ENCODE measurements at regions of chr17 and their contacts with region 1.

Region 1: DNA sequence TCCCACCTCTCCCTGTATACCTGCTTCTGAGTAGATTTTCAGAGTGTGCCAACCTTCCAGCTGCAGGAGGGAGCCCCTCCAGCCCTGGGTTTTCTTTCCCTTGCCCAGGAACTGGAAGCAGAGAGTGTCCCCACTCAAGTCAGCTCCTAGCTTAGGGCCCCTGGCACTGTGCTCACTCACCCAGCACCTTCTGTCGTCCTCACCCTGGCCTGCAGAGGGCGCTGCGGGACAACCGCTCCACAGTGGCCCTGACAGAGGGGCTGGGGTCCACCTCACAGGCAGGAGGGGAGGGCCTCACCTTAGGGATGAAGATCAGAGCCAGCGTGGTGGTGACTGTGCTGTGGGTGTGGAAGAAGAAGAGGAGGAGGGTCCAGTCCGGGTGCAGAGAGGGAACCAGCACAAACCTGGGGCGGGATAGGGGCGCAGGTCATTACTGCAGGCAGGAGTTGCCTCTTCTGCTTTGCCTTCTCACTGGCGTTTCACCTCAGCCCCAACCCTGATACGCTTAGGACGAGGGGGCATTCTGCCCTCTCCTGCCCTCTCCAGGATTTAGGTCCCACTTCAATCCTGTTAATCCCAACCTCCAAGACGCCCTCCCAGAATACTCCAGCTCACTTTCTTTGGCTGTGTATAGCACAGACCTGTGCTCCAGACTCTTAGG is 10.0 kb downstream of the GPR179 start:
- DNase-seq: no peak
- ATAC-seq: peak; percentile 84
- H3K4me3 ChIP-seq: no peak overlapping the region
- H3K27ac ChIP-seq: no peak overlapping the region
- H3K4me1 ChIP-seq: no peaks in the 10 kb centered on the region
- H3K27me3 ChIP-seq: no peaks in the 10 kb centered on the region
- CTCF ChIP-seq: peak; percentile 62 to 73 (median 67)
- EP300 ChIP-seq: no peak
- POLR2A ChIP-seq: no peak
- RAD21 ChIP-seq: peak; percentile 44; the same call in 1 of the 2 replicates

Region 2: GRCh38 chr17:38322091-38322779 is 11.5 kb before region 1 on chr17:
- CTCF ChIA-PET with region 1: interaction called, 36 read pairs
- POLR2A ChIA-PET with region 1: interaction called, 4 read pairs
- RAD21 ChIA-PET with region 1: no interaction called
- SMC1A ChIA-PET with region 1: no interaction called
- in situ Hi-C with region 1: no loop called
- intact Hi-C with region 1: no loop called
- DNase-seq: no peak
- ATAC-seq: peak; percentile 96
- H3K4me3 ChIP-seq: no peak overlapping the region
- H3K27ac ChIP-seq: no peak overlapping the region
- H3K4me1 ChIP-seq: no peaks in the 10 kb centered on the region; the same call in 1 of the 2 replicates
- H3K27me3 ChIP-seq: no peaks in the 10 kb centered on the region
- CTCF ChIP-seq: peak; percentile 51 to 84 (median 57)
- EP300 ChIP-seq: no peak
- POLR2A ChIP-seq: no peak
- RAD21 ChIP-seq: peak; percentile 58

Region 3: DNA sequence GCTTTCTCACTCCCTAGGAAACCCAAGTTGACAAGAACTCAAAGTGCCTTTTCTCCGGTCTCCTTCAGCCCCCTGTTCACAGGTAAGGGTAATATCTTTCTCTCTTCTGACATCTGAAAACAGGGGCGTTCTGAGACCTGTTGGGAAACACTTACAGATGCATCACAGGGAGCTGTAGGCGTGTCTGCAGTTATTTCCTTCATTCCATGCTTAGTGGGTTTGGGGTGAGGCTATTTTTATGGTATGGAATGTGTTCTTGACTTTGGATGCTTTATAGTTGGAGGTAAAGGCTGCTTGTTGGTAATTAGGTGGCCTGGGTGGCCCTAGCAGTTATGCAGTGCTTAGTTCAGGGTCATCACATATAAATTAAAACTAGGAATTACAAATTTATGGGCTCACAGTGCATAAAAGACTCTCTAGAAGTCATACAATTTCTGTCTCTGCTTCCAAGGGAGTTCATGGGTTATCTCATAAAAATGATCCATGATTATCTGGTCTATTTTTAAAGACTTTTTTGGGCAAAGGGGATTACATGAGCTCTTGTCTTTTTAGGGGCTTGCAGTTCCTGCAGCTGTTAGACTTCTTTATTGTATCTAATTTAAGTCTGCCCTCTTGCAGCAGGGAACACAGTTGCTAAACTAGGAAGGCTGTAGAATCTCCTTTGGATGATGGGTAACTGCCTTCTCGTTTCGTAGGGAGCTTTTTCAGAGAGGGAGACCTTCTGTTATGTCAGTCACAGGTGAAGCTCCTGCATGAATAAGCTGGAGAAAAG is 28.1 kb after region 1 on chr17:
- CTCF ChIA-PET with region 1: no interaction called
- POLR2A ChIA-PET with region 1: no interaction called
- RAD21 ChIA-PET with region 1: no interaction called
- SMC1A ChIA-PET with region 1: no interaction called
- in situ Hi-C with region 1: no loop called
- intact Hi-C with region 1: no loop called
- DNase-seq: no peak
- ATAC-seq: no peak
- H3K4me3 ChIP-seq: no peak overlapping the region
- H3K27ac ChIP-seq: no peak overlapping the region
- H3K4me1 ChIP-seq: no peaks in the 10 kb centered on the region
- H3K27me3 ChIP-seq: no peaks in the 10 kb centered on the region
- CTCF ChIP-seq: no peak
- EP300 ChIP-seq: no peak
- POLR2A ChIP-seq: no peak
- RAD21 ChIP-seq: no peak

Measured in GM12878 (cell line).